Vagina (tissue), 2 donors: ENCODE measurements at regions of chr5 and their contacts with region 1.

Region 1: GRCh38 chr5:90878549-90879196 is 320.1 kb downstream of the ADGRV1 start:
- DNase-seq: no peak
- H3K4me3 ChIP-seq: no peak overlapping the region
- H3K27ac ChIP-seq: no peak overlapping the region
- H3K4me1 ChIP-seq: no peaks in the 10 kb centered on the region
- H3K27me3 ChIP-seq: no peaks in the 10 kb centered on the region
- CTCF ChIP-seq: no peak
- POLR2A ChIP-seq: no peak

Region 2: DNA sequence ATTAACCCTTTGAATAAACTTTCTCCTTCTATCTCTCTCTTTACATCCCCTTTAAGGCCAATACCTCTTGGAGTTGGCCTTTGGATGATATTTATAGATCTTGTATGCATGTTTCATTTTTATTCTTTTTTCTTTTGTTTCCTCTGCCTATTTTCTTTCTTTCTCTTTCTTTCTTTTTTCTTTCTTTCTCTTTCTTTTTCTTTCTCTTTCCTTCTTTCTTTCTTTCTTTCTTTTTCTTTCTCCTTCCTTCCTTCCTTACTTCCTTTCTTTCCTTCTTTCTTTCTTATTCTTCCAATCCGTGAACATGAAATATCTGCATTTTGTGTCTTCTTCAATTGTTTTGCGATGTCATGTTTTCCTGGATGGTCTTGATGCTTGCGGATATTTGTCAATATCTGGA is 44.0 kb before region 1 on chr5:
- intact Hi-C with region 1: no loop called
- DNase-seq: no peak
- H3K4me3 ChIP-seq: no peak overlapping the region
- H3K27ac ChIP-seq: no peak overlapping the region
- H3K4me1 ChIP-seq: peaks cover 6% of the 10 kb centered on the region
- H3K27me3 ChIP-seq: no peaks in the 10 kb centered on the region
- CTCF ChIP-seq: no peak
- POLR2A ChIP-seq: no peak

Region 3: DNA sequence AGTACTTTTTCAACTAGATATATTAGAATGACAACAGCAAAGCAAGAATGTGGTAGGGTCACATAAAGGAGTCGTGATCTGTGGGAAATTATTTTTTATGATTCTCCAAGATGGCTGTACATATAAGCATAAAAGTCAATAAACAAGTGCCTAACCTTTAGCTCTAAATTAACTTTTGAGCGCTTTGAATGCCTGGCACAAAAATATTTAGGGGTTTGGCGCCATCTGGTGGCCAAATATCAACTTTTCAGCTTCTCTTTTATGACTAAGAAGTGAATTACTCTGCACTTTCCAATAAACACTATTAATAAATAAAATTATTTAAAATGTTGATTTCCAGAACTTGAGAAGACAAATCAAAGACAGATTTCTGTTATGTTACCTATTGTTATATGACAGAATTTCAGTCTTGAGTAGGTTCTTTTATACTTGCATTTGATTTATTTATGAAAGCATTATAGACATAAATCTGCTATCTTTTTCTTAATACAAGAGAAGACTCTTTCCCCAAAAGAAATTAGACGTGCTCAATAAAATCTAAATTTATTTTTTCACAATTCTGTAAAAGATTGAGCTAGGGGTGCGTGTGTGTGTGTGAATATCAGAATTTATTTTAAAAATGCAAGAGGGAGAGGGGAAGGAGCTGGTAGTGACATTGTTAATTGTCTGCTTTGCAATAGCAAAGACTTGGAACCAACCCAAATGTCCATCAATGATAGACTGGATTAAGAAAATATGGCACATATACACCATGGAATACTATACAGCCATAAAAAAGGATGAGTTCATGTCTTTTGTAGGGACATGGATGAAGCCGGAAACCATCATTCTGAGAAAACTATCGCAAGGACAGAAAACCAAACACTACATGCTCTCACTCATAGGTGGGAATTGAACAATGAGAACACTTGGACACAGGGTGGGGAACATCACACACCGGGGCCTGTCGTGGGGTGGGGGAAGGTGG is 541.2 kb after region 1 on chr5:
- intact Hi-C with region 1: loop called (anchors 10 kb)
- DNase-seq: no peak
- H3K4me3 ChIP-seq: no peak overlapping the region
- H3K27ac ChIP-seq: no peak overlapping the region
- H3K4me1 ChIP-seq: no peaks in the 10 kb centered on the region
- H3K27me3 ChIP-seq: no peaks in the 10 kb centered on the region
- CTCF ChIP-seq: peak; percentile 70 to 92 (median 78)
- POLR2A ChIP-seq: no peak

Region 4: GRCh38 chr5:91963166-91963565 is 1084.5 kb after region 1 on chr5:
- intact Hi-C with region 1: no loop called
- DNase-seq: no peak
- H3K4me3 ChIP-seq: no peak overlapping the region
- H3K27ac ChIP-seq: no peak overlapping the region
- H3K4me1 ChIP-seq: no peaks in the 10 kb centered on the region
- H3K27me3 ChIP-seq: no peaks in the 10 kb centered on the region
- CTCF ChIP-seq: no peak
- POLR2A ChIP-seq: no peak